Left ventricle myocardium inferior (tissue), 1 donor: ENCODE measurements at regions of chr3 and their contacts with region 1.

Region 1: DNA sequence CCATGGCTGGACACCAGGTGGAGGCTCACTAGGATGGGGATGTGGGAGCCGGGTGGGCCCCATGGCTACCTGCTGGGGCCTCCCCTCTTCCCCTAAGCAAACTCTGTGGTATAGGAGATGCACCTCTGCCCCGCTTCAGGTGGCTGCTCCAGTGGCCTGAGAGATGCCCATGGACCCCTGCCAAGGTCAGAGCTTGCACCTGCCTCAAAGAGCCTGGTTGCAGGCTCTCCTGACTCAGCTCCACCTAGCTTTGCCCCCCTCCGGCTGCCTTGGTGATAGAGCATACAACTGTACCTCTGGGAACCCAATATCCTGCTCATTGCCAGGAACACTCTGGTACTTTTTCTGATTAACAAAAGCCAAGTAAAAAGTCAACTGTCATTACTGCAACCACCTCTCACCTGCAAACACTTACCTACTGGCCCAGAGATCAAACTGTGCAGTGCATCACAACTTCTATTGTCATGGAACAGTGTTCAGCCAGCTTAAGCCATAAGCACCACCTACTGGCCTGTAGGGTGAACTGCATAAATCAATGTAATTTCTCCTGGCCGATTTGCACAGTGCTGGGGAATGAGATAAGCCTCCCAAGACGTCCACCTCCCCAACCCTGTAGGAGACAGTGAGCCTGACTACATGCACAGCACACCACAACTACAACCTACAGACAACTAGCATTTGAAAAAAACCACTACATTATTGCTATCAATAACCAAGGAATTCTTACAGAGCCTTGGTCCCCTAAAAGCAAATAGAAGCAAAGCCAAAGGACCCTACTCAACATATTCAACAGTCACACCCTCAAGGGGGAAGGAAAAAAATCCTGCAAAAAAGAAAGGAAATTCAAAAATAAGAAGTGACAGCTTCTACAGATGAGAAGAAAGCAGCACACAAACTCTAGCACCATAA is 352.4 kb upstream of the ARHGEF26 start:
- DNase-seq: no peak
- H3K4me3 ChIP-seq: no peak overlapping the region
- H3K27ac ChIP-seq: no peak overlapping the region
- H3K4me1 ChIP-seq: no peaks in the 10 kb centered on the region
- H3K27me3 ChIP-seq: no peaks in the 10 kb centered on the region
- CTCF ChIP-seq: peak; percentile 83

Region 2: GRCh38 chr3:153032891-153033290 is 735.9 kb before region 1 on chr3:
- intact Hi-C with region 1: loop called (anchors 5 kb)
- DNase-seq: no peak
- H3K4me3 ChIP-seq: no peak overlapping the region
- H3K27ac ChIP-seq: no peak overlapping the region
- H3K4me1 ChIP-seq: peaks cover 18% of the 10 kb centered on the region
- H3K27me3 ChIP-seq: peaks cover 11% of the 10 kb centered on the region
- CTCF ChIP-seq: no peak

Region 3: DNA sequence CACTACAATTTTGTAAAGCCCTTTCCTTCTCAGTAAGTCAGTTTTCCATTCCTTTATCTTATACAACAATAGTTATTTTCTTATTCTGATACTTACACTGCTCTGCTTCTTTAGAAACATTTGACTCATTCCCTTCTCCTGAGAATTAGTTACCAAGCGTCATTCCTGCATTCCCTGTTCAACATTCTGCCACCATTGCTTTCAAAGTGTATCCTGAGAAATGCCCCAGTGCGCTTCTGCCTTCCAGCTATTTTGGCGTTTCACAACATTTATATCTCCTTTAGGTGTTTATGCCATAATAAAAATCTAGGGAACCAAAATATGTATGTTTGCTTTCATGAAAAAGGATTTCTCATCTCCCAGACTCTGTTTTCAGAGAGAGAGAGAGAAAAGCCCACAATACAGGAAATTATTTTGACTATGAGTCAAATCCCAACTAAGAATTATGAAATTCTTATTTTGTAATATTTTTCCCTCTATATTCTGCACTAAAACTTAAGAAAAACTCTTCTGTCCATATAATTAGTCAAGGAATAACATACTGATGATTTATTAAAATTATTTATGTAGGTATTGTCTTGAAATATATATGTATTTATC is 725.0 kb before region 1 on chr3:
- intact Hi-C with region 1: loop called (anchors 5 kb)
- DNase-seq: no peak
- H3K4me3 ChIP-seq: peak overlapping the region; percentile 44
- H3K27ac ChIP-seq: no peak overlapping the region
- H3K4me1 ChIP-seq: no peaks in the 10 kb centered on the region
- H3K27me3 ChIP-seq: no peaks in the 10 kb centered on the region
- CTCF ChIP-seq: no peak

Region 4: GRCh38 chr3:153628591-153628990 is 140.2 kb before region 1 on chr3:
- intact Hi-C with region 1: no loop called
- DNase-seq: no peak
- H3K4me3 ChIP-seq: no peak overlapping the region
- H3K27ac ChIP-seq: peak overlapping the region; percentile 37
- H3K4me1 ChIP-seq: peaks cover 11% of the 10 kb centered on the region
- H3K27me3 ChIP-seq: no peaks in the 10 kb centered on the region
- CTCF ChIP-seq: no peak